ENCODE measurements at regions of chr10 and their contacts with region 1.

Region 1: GRCh38 chr10:70169649-70170364 is 507 bp downstream of the SAR1A start:
- DNase-seq: peak in 1 of 2 experiments; percentile 33
- H3K4me3 ChIP-seq: peak overlapping the region; percentile 66
- H3K4me3 Mint-ChIP-seq: peak overlapping the region; percentile 96
- H3K27ac Mint-ChIP-seq: peak overlapping the region; percentile 98
- H3K4me1 ChIP-seq: peaks cover 5% of the 10 kb centered on the region
- H3K4me1 Mint-ChIP-seq: peaks cover 24% of the 10 kb centered on the region
- H3K27me3 ChIP-seq: no peaks in the 10 kb centered on the region
- H3K27me3 Mint-ChIP-seq: no peaks in the 10 kb centered on the region
- CTCF ChIP-seq: no peak

Region 2: GRCh38 chr10:70125918-70126552 is 43.8 kb before region 1 on chr10:
- CTCF ChIA-PET with region 1: interaction called, 3 read pairs
- POLR2A ChIA-PET with region 1: interaction called, 12 read pairs
- intact Hi-C with region 1: no loop called
- DNase-seq: no peak
- H3K4me3 ChIP-seq: no peak overlapping the region
- H3K4me3 Mint-ChIP-seq: no peak overlapping the region
- H3K27ac Mint-ChIP-seq: no peak overlapping the region
- H3K4me1 ChIP-seq: peaks cover 7% of the 10 kb centered on the region
- H3K4me1 Mint-ChIP-seq: peaks cover 6% of the 10 kb centered on the region
- H3K27me3 ChIP-seq: no peaks in the 10 kb centered on the region
- H3K27me3 Mint-ChIP-seq: no peaks in the 10 kb centered on the region
- CTCF ChIP-seq: no peak

Region 3: GRCh38 chr10:70132098-70133029 is 37.4 kb before region 1 on chr10 and contains the start of gene AIFM2:
- CTCF ChIA-PET with region 1: interaction called, 3 read pairs
- POLR2A ChIA-PET with region 1: interaction called, 12 read pairs
- intact Hi-C with region 1: loop called (anchors 1 kb)
- DNase-seq: peak; percentile 94 to 97
- H3K4me3 ChIP-seq: peak within 1 kb of the TSS; percentile 72
- H3K4me3 Mint-ChIP-seq: peak within 1 kb of the TSS; percentile 81
- H3K27ac Mint-ChIP-seq: peak within 1 kb of the TSS; percentile 78
- H3K4me1 ChIP-seq: peaks cover 21% of the 10 kb centered on the region
- H3K4me1 Mint-ChIP-seq: peaks cover 16% of the 10 kb centered on the region
- H3K27me3 ChIP-seq: no peaks in the 10 kb centered on the region
- H3K27me3 Mint-ChIP-seq: no peaks in the 10 kb centered on the region
- CTCF ChIP-seq: peak in 1 of 2 experiments; percentile 21
- total RNA-seq, gene AIFM2: 29.2 and 31.1 TPM in 2 replicates

Region 4: DNA sequence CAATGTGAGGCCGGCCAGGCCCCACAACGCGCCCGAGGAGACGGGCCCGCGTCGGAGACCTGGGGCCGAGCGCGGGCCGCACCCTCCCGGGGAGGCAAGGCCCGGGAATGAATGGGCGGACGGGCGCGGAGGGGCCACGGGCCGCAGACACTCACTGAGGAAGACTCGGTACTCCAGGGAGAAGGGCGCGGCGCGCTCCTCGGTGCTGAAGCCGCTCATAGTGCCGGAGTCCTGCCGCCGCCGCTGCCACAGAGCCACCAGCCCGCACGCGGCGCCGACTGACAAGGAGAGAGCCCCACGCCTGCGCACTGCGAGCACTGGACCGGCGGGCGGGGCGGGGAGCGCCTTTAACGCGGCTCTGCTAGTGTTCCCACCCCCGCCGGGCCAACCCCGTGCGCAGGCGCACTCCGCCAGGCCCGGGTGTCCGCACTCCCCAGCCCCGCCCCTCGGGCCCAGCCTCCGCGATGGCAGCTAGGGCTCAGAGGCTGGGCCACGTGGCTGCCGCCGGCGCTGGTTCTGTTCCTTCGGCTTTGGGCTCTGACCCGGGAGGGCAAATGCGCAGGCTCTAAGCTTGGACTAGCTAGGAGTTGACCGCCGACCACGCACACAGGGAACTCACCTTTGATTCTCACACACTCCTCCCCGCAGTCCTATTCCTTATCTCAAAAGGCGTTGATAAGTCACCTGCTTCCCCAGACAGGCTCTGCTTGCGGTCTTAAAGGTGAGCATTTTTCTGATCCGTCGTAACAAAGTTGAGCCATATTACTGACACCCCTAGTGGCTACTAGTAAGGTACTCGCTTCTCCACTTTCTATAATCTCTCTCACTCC is 63.5 kb after region 1 on chr10 and contains the start of gene PPA1:
- CTCF ChIA-PET with region 1: no interaction called
- POLR2A ChIA-PET with region 1: interaction called, 6 read pairs
- intact Hi-C with region 1: loop called (anchors 1 kb)
- DNase-seq: peak; percentile 99 to 100
- H3K4me3 ChIP-seq: peak within 1 kb of the TSS; percentile 85
- H3K4me3 Mint-ChIP-seq: peak within 1 kb of the TSS; percentile 76
- H3K27ac Mint-ChIP-seq: peak within 1 kb of the TSS; percentile 99
- H3K4me1 ChIP-seq: peaks cover 19% of the 10 kb centered on the region
- H3K4me1 Mint-ChIP-seq: peaks cover 19% of the 10 kb centered on the region
- H3K27me3 ChIP-seq: no peaks in the 10 kb centered on the region
- H3K27me3 Mint-ChIP-seq: no peaks in the 10 kb centered on the region
- CTCF ChIP-seq: peak; percentile 56 to 81
- total RNA-seq, gene PPA1: 350 and 353 TPM in 2 replicates